Activated T-helper 1 cell treated with anti-CD3 and anti-CD28 coated beads, Interleukin-12 subunit alpha, Interleukin-12 subunit beta, Interleukin-2, Interleukin-4 antibody, amounts not matched to agents 30 ng/mL and 10 ng/mL and 1 ng/mL, durations not matched to agents 14 hours and 24 hours and 36 hours (primary cell): ENCODE measurements at regions of chr13 and their contacts with region 1.

Region 1: GRCh38 chr13:27826379-27827353 is 34.4 kb downstream of the GSX1 start:
- DNase-seq: peak; percentile 52
- H3K4me3 Mint-ChIP-seq: no peak overlapping the region
- H3K27ac Mint-ChIP-seq: no peak overlapping the region
- H3K4me1 Mint-ChIP-seq: no peaks in the 10 kb centered on the region
- H3K27me3 Mint-ChIP-seq: peaks cover 50% of the 10 kb centered on the region

Region 2: GRCh38 chr13:27362064-27362883 is 464.4 kb before region 1 on chr13:
- intact Hi-C with region 1: loop called (anchors 1 kb)
- DNase-seq: peak; percentile 71
- H3K4me3 Mint-ChIP-seq: peak overlapping the region; percentile 49
- H3K27ac Mint-ChIP-seq: no peak overlapping the region
- H3K4me1 Mint-ChIP-seq: no peaks in the 10 kb centered on the region
- H3K27me3 Mint-ChIP-seq: peaks cover 25% of the 10 kb centered on the region

Region 3: DNA sequence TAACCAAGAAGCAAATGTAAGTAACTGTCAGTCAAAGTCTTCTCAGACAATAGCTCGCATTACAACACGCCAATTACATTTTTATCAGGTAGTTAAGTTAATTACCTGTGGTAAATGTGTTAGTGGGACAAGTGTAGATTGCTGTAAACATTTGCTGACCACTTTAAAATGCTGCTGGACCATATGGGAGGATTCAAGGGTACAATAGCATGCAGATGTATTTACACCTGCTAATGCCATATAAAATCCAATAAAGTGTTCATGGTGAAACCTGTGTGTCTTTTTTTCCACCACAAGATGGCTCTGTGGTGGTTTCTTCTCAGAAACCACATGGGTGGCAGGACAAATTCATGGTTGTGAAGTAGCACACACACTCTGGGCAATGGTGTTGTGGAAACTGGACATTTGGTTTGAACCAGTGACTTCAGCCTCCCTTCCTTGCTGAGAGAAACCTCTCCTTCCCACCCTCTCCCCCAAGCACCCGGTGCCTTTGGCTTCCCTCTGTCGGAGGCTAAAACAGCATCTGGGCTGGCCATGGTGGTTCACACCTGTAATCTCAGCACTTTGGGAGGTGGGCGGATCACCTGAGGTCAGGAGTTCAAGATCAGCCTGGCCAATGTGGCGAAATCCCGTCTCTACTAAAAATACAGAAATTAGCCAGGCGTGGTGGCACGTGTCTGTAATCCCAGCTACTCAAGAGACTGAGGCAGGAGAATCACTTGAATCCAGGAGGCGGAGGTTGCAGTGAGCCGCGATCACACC is 420.3 kb before region 1 on chr13:
- intact Hi-C with region 1: loop called (anchors 1 kb)
- DNase-seq: peak; percentile 29
- H3K4me3 Mint-ChIP-seq: no peak overlapping the region
- H3K27ac Mint-ChIP-seq: no peak overlapping the region
- H3K4me1 Mint-ChIP-seq: peaks cover 13% of the 10 kb centered on the region
- H3K27me3 Mint-ChIP-seq: peaks cover 8% of the 10 kb centered on the region

Region 4: DNA sequence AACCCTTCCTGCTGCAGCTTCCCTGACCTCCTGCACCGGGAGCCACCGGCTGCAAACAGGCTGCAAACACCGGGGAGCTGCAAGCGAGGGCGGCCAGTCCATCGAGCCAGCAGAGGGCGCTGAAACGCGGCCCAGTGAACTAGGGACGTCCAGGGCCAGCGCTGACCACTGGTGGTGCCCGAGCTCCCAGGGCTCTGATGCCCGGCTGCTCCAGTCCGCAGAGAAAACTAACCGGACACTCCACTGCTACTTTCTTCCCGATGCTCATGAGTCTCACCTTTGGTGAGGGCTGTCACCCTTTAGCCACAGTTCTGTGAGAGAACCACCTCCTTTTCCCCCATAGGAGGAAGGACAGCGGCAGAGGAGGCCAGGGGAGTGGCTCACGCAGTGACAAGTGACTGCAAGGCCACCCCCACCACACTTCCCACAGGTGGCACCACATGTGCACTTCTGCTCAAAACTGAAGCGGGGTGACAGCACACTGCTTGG is 293.5 kb before region 1 on chr13:
- intact Hi-C with region 1: loop called (anchors 1 kb)
- DNase-seq: peak; percentile 6
- H3K4me3 Mint-ChIP-seq: no peak overlapping the region
- H3K27ac Mint-ChIP-seq: no peak overlapping the region
- H3K4me1 Mint-ChIP-seq: peaks cover 6% of the 10 kb centered on the region
- H3K27me3 Mint-ChIP-seq: no peaks in the 10 kb centered on the region

Region 5: DNA sequence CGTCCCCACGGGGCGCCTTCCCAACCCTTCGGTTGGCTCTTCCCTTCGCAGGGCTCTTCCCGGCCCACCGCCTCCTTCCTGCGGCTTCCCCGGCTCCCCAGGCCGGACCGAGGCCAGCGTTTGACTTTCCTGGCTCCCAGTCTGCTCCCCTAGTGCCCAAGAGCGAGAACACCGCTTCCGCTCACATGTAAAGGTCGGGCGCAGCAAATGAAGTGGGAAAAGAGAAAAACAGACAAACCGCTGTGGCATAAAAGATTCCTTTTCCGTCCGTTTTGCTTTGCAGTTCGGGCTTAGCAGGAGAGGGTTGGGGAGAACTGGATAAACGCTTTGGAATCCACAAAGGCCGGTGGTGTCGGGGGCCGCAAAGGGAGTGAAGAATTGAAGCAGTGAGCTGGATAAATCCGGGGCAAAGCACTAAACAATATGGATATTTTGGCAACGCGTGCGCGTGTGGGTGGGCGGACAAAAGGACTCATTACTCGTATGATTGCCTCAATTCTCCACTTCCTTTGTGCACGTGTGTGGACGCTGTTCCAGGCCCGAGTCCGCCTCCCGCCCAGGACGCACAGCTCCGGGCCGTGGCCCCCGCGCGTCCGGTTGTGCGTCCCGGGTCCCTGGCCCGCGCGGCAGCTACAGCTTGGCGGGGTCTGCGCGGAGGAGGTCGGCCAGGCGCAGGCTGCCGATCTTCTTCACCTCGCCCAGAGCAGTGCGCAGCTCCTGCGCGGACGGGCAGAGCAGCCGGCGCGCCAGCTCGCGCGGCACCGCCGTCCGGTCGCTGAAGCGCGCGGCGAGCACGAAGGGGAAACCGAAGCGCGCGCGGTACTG is 151.0 kb after region 1 on chr13:
- intact Hi-C with region 1: loop called (anchors 1 kb)
- DNase-seq: no peak
- H3K4me3 Mint-ChIP-seq: no peak overlapping the region
- H3K27ac Mint-ChIP-seq: peak overlapping the region; percentile 72
- H3K4me1 Mint-ChIP-seq: peaks cover 18% of the 10 kb centered on the region
- H3K27me3 Mint-ChIP-seq: peaks cover 79% of the 10 kb centered on the region